B cell (primary cell): ENCODE measurements at regions of chrX and their contacts with region 1.

Region 1: GRCh38 chrX:43750248-43750676 is 94.2 kb downstream of the MAOA start:
- DNase-seq: peak; percentile 65
- ATAC-seq: peak; percentile 64
- H3K4me3 ChIP-seq: no peak overlapping the region
- H3K4me3 Mint-ChIP-seq: no peak overlapping the region
- H3K27ac ChIP-seq: no peak overlapping the region
- H3K27ac Mint-ChIP-seq: no peak overlapping the region
- H3K4me1 ChIP-seq: peaks cover 0 to 3% of the 10 kb centered on the region in 2 donors
- H3K4me1 Mint-ChIP-seq: no peaks in the 10 kb centered on the region
- H3K27me3 ChIP-seq: peaks cover 0 to 3% (median 0%) of the 10 kb centered on the region in 4 experiments
- H3K27me3 Mint-ChIP-seq: peaks cover 3% of the 10 kb centered on the region
- CTCF ChIP-seq: peak; percentile 58

Region 2: DNA sequence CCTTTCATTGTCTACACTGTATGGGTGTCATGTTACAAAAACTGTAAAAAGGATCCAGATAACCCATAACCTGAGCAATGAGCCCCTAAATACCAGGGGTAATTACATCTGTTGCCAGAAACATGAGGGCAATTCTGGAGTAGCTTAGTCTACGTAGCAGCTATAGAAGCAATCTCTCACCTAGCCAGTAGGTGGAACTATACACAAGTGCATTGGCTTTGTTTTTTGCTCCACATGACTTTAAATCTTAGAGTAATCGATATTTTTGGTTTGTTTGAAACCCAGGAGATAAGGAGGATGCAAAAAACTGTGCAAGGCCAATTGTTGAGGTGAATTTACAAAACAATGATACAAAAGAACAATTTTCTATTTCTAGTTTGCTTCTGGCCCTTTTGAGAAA is 1968.8 kb before region 1 on chrX:
- CTCF ChIA-PET with region 1: interaction called, 11 read pairs
- POLR2A ChIA-PET with region 1: no interaction called
- intact Hi-C with region 1: loop called (anchors 1 kb)
- DNase-seq: peak; percentile 49
- ATAC-seq: peak; percentile 53
- H3K4me3 ChIP-seq: no peak overlapping the region
- H3K4me3 Mint-ChIP-seq: no peak overlapping the region
- H3K27ac ChIP-seq: no peak overlapping the region
- H3K27ac Mint-ChIP-seq: no peak overlapping the region
- H3K4me1 ChIP-seq: peaks cover 0 to 3% of the 10 kb centered on the region in 2 donors
- H3K4me1 Mint-ChIP-seq: peaks cover 4% of the 10 kb centered on the region
- H3K27me3 ChIP-seq: no peaks in the 10 kb centered on the region
- H3K27me3 Mint-ChIP-seq: no peaks in the 10 kb centered on the region
- CTCF ChIP-seq: peak; percentile 79

Region 3: GRCh38 chrX:41796577-41796976 is 1953.7 kb before region 1 on chrX:
- CTCF ChIA-PET with region 1: interaction called, 16 read pairs
- POLR2A ChIA-PET with region 1: no interaction called
- intact Hi-C with region 1: loop called (anchors 2 kb)
- DNase-seq: no peak
- ATAC-seq: no peak
- H3K4me3 ChIP-seq: no peak overlapping the region
- H3K4me3 Mint-ChIP-seq: no peak overlapping the region
- H3K27ac ChIP-seq: no peak overlapping the region
- H3K27ac Mint-ChIP-seq: peak overlapping the region; percentile 60
- H3K4me1 ChIP-seq: peaks cover 19 to 20% of the 10 kb centered on the region in 2 donors
- H3K4me1 Mint-ChIP-seq: peaks cover 30% of the 10 kb centered on the region
- H3K27me3 ChIP-seq: no peaks in the 10 kb centered on the region
- H3K27me3 Mint-ChIP-seq: no peaks in the 10 kb centered on the region
- CTCF ChIP-seq: no peak

Region 4: DNA sequence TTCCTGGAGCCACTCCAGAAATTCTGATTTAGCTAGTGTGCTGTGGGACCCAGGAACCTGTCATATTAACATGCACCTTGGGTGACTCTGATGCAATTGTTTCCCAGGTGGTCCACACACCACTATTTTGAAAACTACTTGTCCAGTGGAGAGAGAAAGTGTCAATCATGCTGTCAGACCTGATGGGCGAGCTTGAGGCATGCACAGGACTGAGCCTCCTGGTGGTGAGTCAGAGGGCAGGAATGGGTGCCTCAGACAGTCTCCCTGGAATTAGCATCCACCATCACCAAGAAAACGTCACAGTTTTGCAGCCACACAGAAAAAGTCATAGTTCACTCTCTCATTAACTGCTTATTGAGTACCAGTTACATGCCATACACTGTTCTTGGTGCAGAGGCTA is 276.0 kb before region 1 on chrX:
- CTCF ChIA-PET with region 1: no interaction called
- POLR2A ChIA-PET with region 1: no interaction called
- intact Hi-C with region 1: no loop called
- DNase-seq: no peak
- ATAC-seq: no peak
- H3K4me3 ChIP-seq: no peak overlapping the region
- H3K4me3 Mint-ChIP-seq: no peak overlapping the region
- H3K27ac ChIP-seq: no peak overlapping the region
- H3K27ac Mint-ChIP-seq: no peak overlapping the region
- H3K4me1 ChIP-seq: no peaks in the 10 kb centered on the region
- H3K4me1 Mint-ChIP-seq: no peaks in the 10 kb centered on the region
- H3K27me3 ChIP-seq: no peaks in the 10 kb centered on the region
- H3K27me3 Mint-ChIP-seq: no peaks in the 10 kb centered on the region
- CTCF ChIP-seq: no peak

Region 5: DNA sequence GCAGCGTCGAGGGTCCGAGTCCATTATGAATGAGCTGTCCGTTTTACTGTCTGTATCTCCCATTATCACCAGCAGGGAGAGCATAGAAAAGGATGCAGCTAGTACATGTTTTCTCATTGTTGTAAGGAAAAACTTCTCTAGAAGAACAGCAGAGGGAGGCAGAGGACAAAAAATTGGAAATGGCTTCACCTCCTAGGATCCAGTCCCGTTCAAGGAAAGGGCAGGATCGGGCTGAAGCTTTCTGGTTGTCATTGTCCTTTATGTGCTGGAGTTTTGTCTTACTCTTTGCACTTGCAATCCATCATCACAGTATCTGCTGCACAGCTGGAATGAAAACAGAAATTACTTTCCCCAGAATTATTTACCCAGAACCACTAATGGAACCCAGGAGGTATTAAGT is 208.3 kb after region 1 on chrX:
- CTCF ChIA-PET with region 1: no interaction called
- POLR2A ChIA-PET with region 1: no interaction called
- intact Hi-C with region 1: no loop called
- DNase-seq: peak; percentile 58
- ATAC-seq: peak; percentile 41
- H3K4me3 ChIP-seq: no peak overlapping the region
- H3K4me3 Mint-ChIP-seq: no peak overlapping the region
- H3K27ac ChIP-seq: no peak overlapping the region
- H3K27ac Mint-ChIP-seq: no peak overlapping the region
- H3K4me1 ChIP-seq: no peaks in the 10 kb centered on the region
- H3K4me1 Mint-ChIP-seq: no peaks in the 10 kb centered on the region
- H3K27me3 ChIP-seq: no peaks in the 10 kb centered on the region
- H3K27me3 Mint-ChIP-seq: peaks cover 18% of the 10 kb centered on the region
- CTCF ChIP-seq: peak; percentile 64